ENCODE measurements at regions of chr20 and their contacts with region 1.

Region 1: GRCh38 chr20:50744143-50744792 is 12.9 kb downstream of the PARD6B start:
- DNase-seq: no peak
- ATAC-seq: no peak
- H3K4me3 Mint-ChIP-seq: no peak overlapping the region
- H3K27ac Mint-ChIP-seq: peak overlapping the region; percentile 52
- H3K4me1 Mint-ChIP-seq: peaks cover 36% of the 10 kb centered on the region
- H3K27me3 Mint-ChIP-seq: no peaks in the 10 kb centered on the region
- CTCF ChIP-seq: no peak

Region 2: DNA sequence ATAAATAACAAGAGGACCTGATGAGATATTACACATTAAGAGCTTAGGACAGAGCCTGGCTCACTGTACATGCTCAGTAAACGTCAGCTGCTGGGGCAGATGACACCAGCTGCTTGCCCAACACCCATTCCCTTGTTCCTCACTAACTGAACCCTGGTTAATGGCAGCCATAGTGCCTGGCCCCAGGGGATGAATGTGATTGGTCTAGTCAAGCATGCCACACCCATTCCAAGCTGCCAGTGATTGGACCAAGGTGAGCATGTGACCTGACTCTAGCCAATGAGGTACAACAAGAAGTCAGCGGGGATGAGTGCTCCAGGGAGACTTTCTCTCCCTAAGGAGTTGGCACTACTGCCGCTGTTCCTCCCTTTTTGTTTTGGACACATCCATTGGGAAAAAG is 319.2 kb before region 1 on chr20:
- CTCF ChIA-PET with region 1: no interaction called
- POLR2A ChIA-PET with region 1: no interaction called
- intact Hi-C with region 1: no loop called
- DNase-seq: peak; percentile 15
- ATAC-seq: peak; percentile 34
- H3K4me3 Mint-ChIP-seq: no peak overlapping the region
- H3K27ac Mint-ChIP-seq: no peak overlapping the region
- H3K4me1 Mint-ChIP-seq: no peaks in the 10 kb centered on the region
- H3K27me3 Mint-ChIP-seq: no peaks in the 10 kb centered on the region
- CTCF ChIP-seq: no peak

Region 3: GRCh38 chr20:50663095-50663850 is 81.0 kb before region 1 on chr20:
- CTCF ChIA-PET with region 1: interaction called, 14 read pairs
- POLR2A ChIA-PET with region 1: no interaction called
- intact Hi-C with region 1: loop called (anchors 10 kb)
- DNase-seq: peak; percentile 25
- ATAC-seq: no peak
- H3K4me3 Mint-ChIP-seq: no peak overlapping the region
- H3K27ac Mint-ChIP-seq: no peak overlapping the region
- H3K4me1 Mint-ChIP-seq: no peaks in the 10 kb centered on the region
- H3K27me3 Mint-ChIP-seq: peaks cover 3% of the 10 kb centered on the region
- CTCF ChIP-seq: no peak

Region 4: DNA sequence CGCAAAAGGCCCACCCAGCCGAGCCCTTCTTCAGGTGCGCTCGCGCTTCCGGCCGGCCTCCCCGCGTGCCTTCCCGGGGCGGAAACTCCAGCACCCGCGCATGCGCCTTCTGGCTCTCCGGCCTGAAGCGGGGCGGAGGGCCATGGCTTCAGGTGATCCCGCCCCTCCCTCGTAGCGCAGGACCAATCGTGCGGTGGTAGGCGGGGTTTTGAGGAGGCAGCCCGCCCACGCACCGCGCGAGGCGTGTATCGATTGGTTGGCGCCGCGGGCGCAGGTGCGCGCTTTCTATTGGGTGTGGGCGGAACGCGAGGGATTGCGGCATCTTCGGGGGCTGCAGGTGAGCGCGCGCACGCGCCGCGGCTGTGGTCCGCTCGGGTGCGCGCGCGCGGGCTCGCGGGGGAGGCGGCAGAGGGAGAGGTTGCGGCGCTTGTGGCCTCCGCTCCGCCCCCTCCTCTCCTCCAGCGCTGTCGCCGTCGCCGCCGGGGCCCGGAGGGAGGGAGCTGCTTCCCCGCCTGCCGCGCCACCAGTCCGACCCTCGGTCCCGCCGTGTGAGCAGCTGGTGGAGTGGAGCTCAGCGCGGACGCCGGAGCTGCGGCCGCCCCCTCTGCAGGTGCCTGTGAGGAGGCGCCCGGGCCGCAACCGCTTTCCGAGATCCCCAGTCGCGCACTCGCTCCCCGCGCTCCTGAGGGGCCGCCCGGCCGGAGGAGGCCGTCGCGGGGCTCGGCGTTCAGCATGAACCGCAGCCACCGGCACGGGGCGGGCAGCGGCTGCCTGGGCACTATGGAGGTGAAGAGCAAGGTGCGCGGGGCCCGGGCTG is 13.0 kb before region 1 on chr20 and contains the start of gene PARD6B:
- CTCF ChIA-PET with region 1: interaction called, 27 read pairs
- POLR2A ChIA-PET with region 1: interaction called, 3 read pairs
- intact Hi-C with region 1: loop called (anchors 2 kb)
- DNase-seq: peak; percentile 100
- ATAC-seq: peak; percentile 94
- H3K4me3 Mint-ChIP-seq: peak within 1 kb of the TSS; percentile 84
- H3K27ac Mint-ChIP-seq: peak within 1 kb of the TSS; percentile 55
- H3K4me1 Mint-ChIP-seq: peaks cover 37% of the 10 kb centered on the region
- H3K27me3 Mint-ChIP-seq: no peaks in the 10 kb centered on the region
- CTCF ChIP-seq: no peak
- total RNA-seq, gene PARD6B: 4.7 to 6.6 TPM

Measured in activated CD8-positive, alpha-beta T cell treated with anti-CD3 and anti-CD28 coated beads for 36 hours (primary cell).